Activated T-helper 1 cell treated with anti-CD3 and anti-CD28 coated beads, Interleukin-12 subunit alpha, Interleukin-12 subunit beta, Interleukin-2, Interleukin-4 antibody, amounts not matched to agents 30 ng/mL and 10 ng/mL and 1 ng/mL, durations not matched to agents 14 hours and 24 hours and 36 hours (primary cell): ENCODE measurements at regions of chr2 and their contacts with region 1.

Region 1: GRCh38 chr2:177148477-177149154 is 64.0 kb upstream of the HNRNPA3 start:
- DNase-seq: peak; percentile 65
- H3K4me3 Mint-ChIP-seq: peak overlapping the region; percentile 82
- H3K27ac Mint-ChIP-seq: peak overlapping the region; percentile 10
- H3K4me1 Mint-ChIP-seq: peaks cover 13% of the 10 kb centered on the region
- H3K27me3 Mint-ChIP-seq: peaks cover 61% of the 10 kb centered on the region

Region 2: GRCh38 chr2:176454893-176455811 is 693.5 kb before region 1 on chr2:
- intact Hi-C with region 1: loop called (anchors 1 kb)
- DNase-seq: peak; percentile 59
- H3K4me3 Mint-ChIP-seq: no peak overlapping the region
- H3K27ac Mint-ChIP-seq: no peak overlapping the region
- H3K4me1 Mint-ChIP-seq: no peaks in the 10 kb centered on the region
- H3K27me3 Mint-ChIP-seq: peaks cover 13% of the 10 kb centered on the region

Region 3: GRCh38 chr2:176653479-176654443 is 494.9 kb before region 1 on chr2:
- intact Hi-C with region 1: loop called (anchors 2 kb)
- DNase-seq: no peak
- H3K4me3 Mint-ChIP-seq: no peak overlapping the region
- H3K27ac Mint-ChIP-seq: no peak overlapping the region
- H3K4me1 Mint-ChIP-seq: peaks cover 18% of the 10 kb centered on the region
- H3K27me3 Mint-ChIP-seq: peaks cover 45% of the 10 kb centered on the region

Region 4: GRCh38 chr2:176814306-176815052 is 334.1 kb before region 1 on chr2:
- intact Hi-C with region 1: loop called (anchors 1 kb)
- DNase-seq: no peak
- H3K4me3 Mint-ChIP-seq: no peak overlapping the region
- H3K27ac Mint-ChIP-seq: no peak overlapping the region
- H3K4me1 Mint-ChIP-seq: peaks cover 5% of the 10 kb centered on the region
- H3K27me3 Mint-ChIP-seq: peaks cover 2% of the 10 kb centered on the region

Region 5: GRCh38 chr2:177618255-177619253 is 469.9 kb after region 1 on chr2:
- intact Hi-C with region 1: loop called (anchors 5 kb)
- DNase-seq: peak; percentile 91
- H3K4me3 Mint-ChIP-seq: peak overlapping the region; percentile 94
- H3K27ac Mint-ChIP-seq: peak overlapping the region; percentile 99
- H3K4me1 Mint-ChIP-seq: peaks cover 13% of the 10 kb centered on the region
- H3K27me3 Mint-ChIP-seq: peaks cover 4% of the 10 kb centered on the region